ENCODE measurements at regions of chr1 and their contacts with region 1.

Region 1: DNA sequence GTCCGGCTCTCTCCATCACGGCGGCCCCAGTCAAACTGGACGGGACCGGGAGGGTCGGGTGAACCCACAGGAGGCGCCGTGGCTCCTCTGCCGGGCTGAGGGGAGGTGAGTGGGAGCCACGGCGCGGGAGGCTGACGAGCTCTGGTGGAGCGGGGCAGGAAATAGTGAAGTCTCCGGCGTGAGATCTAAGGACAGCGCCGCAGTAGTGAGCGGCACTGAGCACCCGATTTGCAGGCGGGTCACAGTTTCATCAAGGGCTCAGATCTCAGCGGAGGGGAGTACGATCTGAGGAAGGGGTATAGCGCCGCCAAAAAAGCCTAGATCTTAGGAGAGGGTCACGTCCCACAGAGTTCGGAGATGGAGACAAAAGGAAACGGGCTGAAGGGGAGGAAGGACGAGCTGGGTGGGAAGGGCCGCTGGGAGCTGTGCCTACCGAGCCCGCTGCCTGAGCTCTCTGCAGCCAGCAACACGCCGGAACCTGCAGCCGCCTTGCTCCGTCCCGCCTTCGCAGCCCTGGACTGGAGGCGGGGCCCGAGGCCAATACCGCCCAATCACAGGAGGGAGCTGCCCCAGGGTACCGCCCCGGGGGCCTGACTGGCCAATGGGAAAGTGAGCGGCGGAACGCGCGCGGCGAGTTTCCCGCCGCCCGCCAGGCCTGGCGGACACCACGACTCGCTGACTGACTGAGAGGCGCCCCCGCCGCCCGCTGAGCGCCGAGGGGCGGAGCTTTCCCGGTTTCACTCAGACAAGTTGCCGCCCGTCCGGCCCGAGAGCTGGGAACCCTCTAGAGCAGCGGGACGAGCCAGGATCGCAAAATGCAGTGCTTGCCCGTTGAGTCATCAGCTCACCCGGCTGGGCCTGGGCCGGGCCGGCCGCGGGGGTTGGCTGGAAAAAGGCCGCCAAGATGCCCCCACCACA is 1.9 kb downstream of the SFN start:
- DNase-seq: peak; percentile 97
- ATAC-seq: peak; percentile 95
- H3K4me3 ChIP-seq: peak overlapping the region; percentile 80 to 99 (median 89)
- H3K4me3 Mint-ChIP-seq: peak overlapping the region; percentile 94
- H3K27ac ChIP-seq: peak overlapping the region; percentile 86 to 90
- H3K27ac Mint-ChIP-seq: peak overlapping the region; percentile 89
- H3K4me1 ChIP-seq: peaks cover 9 to 25% of the 10 kb centered on the region in 2 donors
- H3K4me1 Mint-ChIP-seq: peaks cover 20% of the 10 kb centered on the region
- H3K27me3 ChIP-seq: no peaks in the 10 kb centered on the region
- H3K27me3 Mint-ChIP-seq: no peaks in the 10 kb centered on the region
- CTCF ChIP-seq: no peak

Region 2: GRCh38 chr1:26820784-26821269 is 44.0 kb before region 1 on chr1:
- CTCF ChIA-PET with region 1: interaction called, 14 read pairs
- POLR2A ChIA-PET with region 1: interaction called, 7 read pairs
- intact Hi-C with region 1: loop called (anchors 1 kb)
- DNase-seq: peak; percentile 91
- ATAC-seq: peak; percentile 100
- H3K4me3 ChIP-seq: peak overlapping the region in 1 of 5 experiments; percentile 8
- H3K4me3 Mint-ChIP-seq: peak overlapping the region; percentile 81
- H3K27ac ChIP-seq: peak overlapping the region in 1 of 2 donors; percentile 46
- H3K27ac Mint-ChIP-seq: peak overlapping the region; percentile 87
- H3K4me1 ChIP-seq: peaks cover 21 to 29% of the 10 kb centered on the region in 2 donors
- H3K4me1 Mint-ChIP-seq: peaks cover 21% of the 10 kb centered on the region
- H3K27me3 ChIP-seq: peaks cover 0 to 21% (median 5%) of the 10 kb centered on the region in 4 experiments
- H3K27me3 Mint-ChIP-seq: peaks cover 10% of the 10 kb centered on the region
- CTCF ChIP-seq: peak; percentile 73

Region 3: DNA sequence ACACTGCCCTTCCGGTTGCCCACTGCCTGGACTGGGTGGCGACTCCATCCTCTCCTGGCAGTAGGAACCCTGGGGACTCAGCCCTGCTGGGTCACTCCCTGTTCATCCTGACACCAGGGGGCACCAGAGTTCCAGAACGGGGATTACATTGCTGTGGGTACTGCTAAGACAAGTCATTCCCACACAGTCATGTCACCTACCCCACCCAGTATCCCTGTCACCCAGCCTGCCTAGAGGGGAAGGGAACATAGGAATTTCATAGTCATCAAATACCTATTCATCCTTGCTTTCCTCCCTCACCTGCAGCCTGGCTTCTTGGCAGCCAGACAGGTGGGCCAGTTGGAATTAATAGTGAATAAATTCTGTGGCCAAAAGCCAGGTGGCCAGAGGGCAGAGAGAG is 11.7 kb before region 1 on chr1:
- CTCF ChIA-PET with region 1: interaction called, 22 read pairs
- POLR2A ChIA-PET with region 1: interaction called, 3 read pairs
- intact Hi-C with region 1: no loop called
- DNase-seq: peak; percentile 85
- ATAC-seq: peak; percentile 89
- H3K4me3 ChIP-seq: no peak overlapping the region
- H3K4me3 Mint-ChIP-seq: no peak overlapping the region
- H3K27ac ChIP-seq: no peak overlapping the region
- H3K27ac Mint-ChIP-seq: no peak overlapping the region
- H3K4me1 ChIP-seq: no peaks in the 10 kb centered on the region
- H3K4me1 Mint-ChIP-seq: no peaks in the 10 kb centered on the region
- H3K27me3 ChIP-seq: no peaks in the 10 kb centered on the region
- H3K27me3 Mint-ChIP-seq: no peaks in the 10 kb centered on the region
- CTCF ChIP-seq: peak; percentile 87

Region 4: GRCh38 chr1:26882696-26883463 is 18.0 kb after region 1 on chr1:
- CTCF ChIA-PET with region 1: interaction called, 23 read pairs
- POLR2A ChIA-PET with region 1: interaction called, 26 read pairs
- intact Hi-C with region 1: loop called (anchors 1 kb)
- DNase-seq: no peak
- ATAC-seq: no peak
- H3K4me3 ChIP-seq: no peak overlapping the region
- H3K4me3 Mint-ChIP-seq: no peak overlapping the region
- H3K27ac ChIP-seq: no peak overlapping the region
- H3K27ac Mint-ChIP-seq: no peak overlapping the region
- H3K4me1 ChIP-seq: peaks cover 0 to under 1% of the 10 kb centered on the region in 2 donors
- H3K4me1 Mint-ChIP-seq: peaks cover 8% of the 10 kb centered on the region
- H3K27me3 ChIP-seq: no peaks in the 10 kb centered on the region
- H3K27me3 Mint-ChIP-seq: no peaks in the 10 kb centered on the region
- CTCF ChIP-seq: no peak

Region 5: GRCh38 chr1:26900001-26900814 is 35.3 kb after region 1 on chr1 and contains the start of gene GPATCH3:
- CTCF ChIA-PET with region 1: interaction called, 4 read pairs
- POLR2A ChIA-PET with region 1: interaction called, 3 read pairs
- intact Hi-C with region 1: loop called (anchors 2 kb)
- DNase-seq: peak; percentile 94
- ATAC-seq: peak; percentile 92
- H3K4me3 ChIP-seq: peak within 1 kb of the TSS; percentile 84 to 100 (median 97)
- H3K4me3 Mint-ChIP-seq: peak within 1 kb of the TSS; percentile 92
- H3K27ac ChIP-seq: peak within 1 kb of the TSS; percentile 82 to 92
- H3K27ac Mint-ChIP-seq: peak within 1 kb of the TSS; percentile 99
- H3K4me1 ChIP-seq: peaks cover 16 to 20% of the 10 kb centered on the region in 2 donors
- H3K4me1 Mint-ChIP-seq: peaks cover 36% of the 10 kb centered on the region
- H3K27me3 ChIP-seq: no peaks in the 10 kb centered on the region
- H3K27me3 Mint-ChIP-seq: no peaks in the 10 kb centered on the region
- CTCF ChIP-seq: no peak
- total RNA-seq, gene GPATCH3: 21.9 and 28.6 TPM in 2 replicates

Region 6: GRCh38 chr1:26913754-26914619 is 49.1 kb after region 1 on chr1 and contains the start of gene NR0B2:
- CTCF ChIA-PET with region 1: no interaction called
- POLR2A ChIA-PET with region 1: no interaction called
- intact Hi-C with region 1: no loop called
- DNase-seq: no peak
- ATAC-seq: no peak
- H3K4me3 ChIP-seq: no peak within 1 kb of the TSS
- H3K4me3 Mint-ChIP-seq: no peak within 1 kb of the TSS
- H3K27ac ChIP-seq: no peak within 1 kb of the TSS
- H3K27ac Mint-ChIP-seq: no peak within 1 kb of the TSS
- H3K4me1 ChIP-seq: no peaks in the 10 kb centered on the region
- H3K4me1 Mint-ChIP-seq: no peaks in the 10 kb centered on the region
- H3K27me3 ChIP-seq: no peaks in the 10 kb centered on the region
- H3K27me3 Mint-ChIP-seq: peaks cover 5% of the 10 kb centered on the region
- CTCF ChIP-seq: no peak
- total RNA-seq, gene NR0B2: not detected in 2 replicates

Measured in B cell (primary cell).